ENCODE measurements at regions of chr2 and their contacts with region 1.

Region 1: GRCh38 chr2:226799181-226799975 is at the start of gene IRS1:
- DNase-seq: peak; percentile 46 to 66 (median 50)
- H3K4me3 ChIP-seq: peak within 1 kb of the TSS; percentile 29 to 66
- H3K4me3 Mint-ChIP-seq: peak within 1 kb of the TSS; percentile 84 to 90 (median 88)
- H3K27ac ChIP-seq: peak within 1 kb of the TSS; percentile 1
- H3K27ac Mint-ChIP-seq: peak within 1 kb of the TSS in 4 of 7 donors; percentile 42 to 84 (median 62)
- H3K4me1 ChIP-seq: peaks cover 22% of the 10 kb centered on the region
- H3K4me1 Mint-ChIP-seq: peaks cover 18 to 35% (median 24%) of the 10 kb centered on the region in 4 donors
- H3K27me3 ChIP-seq: no peaks in the 10 kb centered on the region
- H3K27me3 Mint-ChIP-seq: peaks cover 4 to 11% of the 10 kb centered on the region in 2 donors
- total RNA-seq, gene IRS1: 2.2 to 2.4 TPM

Region 2: GRCh38 chr2:225660262-225661131 is 1138.9 kb before region 1 on chr2:
- CTCF ChIA-PET with region 1: interaction called, 18 read pairs
- POLR2A ChIA-PET with region 1: no interaction called
- intact Hi-C with region 1: no loop called
- DNase-seq: peak; percentile 51 to 63 (median 61)
- H3K4me3 ChIP-seq: no peak overlapping the region
- H3K4me3 Mint-ChIP-seq: no peak overlapping the region
- H3K27ac ChIP-seq: no peak overlapping the region
- H3K27ac Mint-ChIP-seq: no peak overlapping the region
- H3K4me1 ChIP-seq: no peaks in the 10 kb centered on the region
- H3K4me1 Mint-ChIP-seq: peaks cover 0 to 2% (median under 1%) of the 10 kb centered on the region in 4 donors
- H3K27me3 ChIP-seq: no peaks in the 10 kb centered on the region
- H3K27me3 Mint-ChIP-seq: peaks cover 10 to 15% of the 10 kb centered on the region in 2 donors

Region 3: GRCh38 chr2:226030788-226031646 is 768.4 kb before region 1 on chr2:
- CTCF ChIA-PET with region 1: no interaction called
- POLR2A ChIA-PET with region 1: no interaction called
- intact Hi-C with region 1: loop called (anchors 5 kb)
- DNase-seq: no peak
- H3K4me3 ChIP-seq: no peak overlapping the region
- H3K4me3 Mint-ChIP-seq: peak overlapping the region in 7 of 8 donors; percentile 30 to 81 (median 59)
- H3K27ac ChIP-seq: no peak overlapping the region
- H3K27ac Mint-ChIP-seq: no peak overlapping the region
- H3K4me1 ChIP-seq: no peaks in the 10 kb centered on the region
- H3K4me1 Mint-ChIP-seq: peaks cover 5 to 17% (median 7%) of the 10 kb centered on the region in 4 donors
- H3K27me3 ChIP-seq: peaks cover 4% of the 10 kb centered on the region
- H3K27me3 Mint-ChIP-seq: peaks cover 26 to 30% of the 10 kb centered on the region in 2 donors

Region 4: GRCh38 chr2:226742347-226742746 is 57.0 kb before region 1 on chr2:
- CTCF ChIA-PET with region 1: no interaction called
- POLR2A ChIA-PET with region 1: no interaction called
- intact Hi-C with region 1: no loop called
- DNase-seq: no peak
- H3K4me3 ChIP-seq: no peak overlapping the region
- H3K4me3 Mint-ChIP-seq: no peak overlapping the region
- H3K27ac ChIP-seq: no peak overlapping the region
- H3K27ac Mint-ChIP-seq: no peak overlapping the region
- H3K4me1 ChIP-seq: no peaks in the 10 kb centered on the region
- H3K4me1 Mint-ChIP-seq: peaks cover 0 to 1% (median 0%) of the 10 kb centered on the region in 4 donors
- H3K27me3 ChIP-seq: no peaks in the 10 kb centered on the region
- H3K27me3 Mint-ChIP-seq: peaks cover 2% of the 10 kb centered on the region in 2 donors

Region 5: DNA sequence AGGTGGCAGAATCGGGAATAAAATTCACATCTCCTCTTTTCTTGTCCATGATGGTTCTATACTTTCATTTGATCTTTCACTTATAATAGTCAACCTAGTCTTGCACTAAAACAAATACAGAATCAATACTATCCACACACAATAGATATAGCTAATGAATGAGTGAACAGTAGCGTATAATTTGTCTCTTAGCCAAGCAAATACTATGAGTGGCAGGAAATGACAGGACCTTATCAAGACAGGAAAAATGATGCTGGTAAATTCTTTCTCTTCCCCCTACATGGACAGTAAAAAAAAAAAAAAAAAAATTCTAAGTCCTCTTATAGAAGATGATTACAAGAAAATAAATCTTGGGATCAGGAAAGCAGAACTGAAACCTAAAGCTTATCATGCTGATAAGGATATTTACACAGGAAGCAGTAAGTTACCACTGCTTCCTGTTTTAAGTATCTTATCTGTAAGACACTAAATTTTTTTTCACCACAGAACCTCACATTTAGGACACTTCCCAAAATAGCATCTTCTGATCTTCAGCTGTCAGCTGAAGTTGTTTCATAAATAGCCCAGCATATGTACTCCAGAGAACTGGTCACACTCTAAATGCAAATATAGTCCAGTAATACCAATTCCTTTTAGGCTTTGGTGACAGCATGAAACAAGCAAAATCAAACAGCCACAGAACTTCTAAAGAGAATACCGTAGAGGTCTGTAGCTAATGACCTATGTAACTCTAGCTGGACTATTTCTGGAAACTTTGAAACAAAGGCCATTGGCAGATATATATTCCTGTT is 26.8 kb before region 1 on chr2:
- CTCF ChIA-PET with region 1: interaction called, 10 read pairs
- POLR2A ChIA-PET with region 1: interaction called, 3 read pairs
- intact Hi-C with region 1: loop called (anchors 2 kb)
- DNase-seq: peak in 4 of 5 donors; percentile 25 to 48 (median 36)
- H3K4me3 ChIP-seq: peak overlapping the region in 1 of 2 donors; percentile 16
- H3K4me3 Mint-ChIP-seq: peak overlapping the region; percentile 61 to 84 (median 73)
- H3K27ac ChIP-seq: no peak overlapping the region
- H3K27ac Mint-ChIP-seq: peak overlapping the region in 3 of 7 donors; percentile 5 to 43 (median 26)
- H3K4me1 ChIP-seq: peaks cover 22% of the 10 kb centered on the region
- H3K4me1 Mint-ChIP-seq: peaks cover 19 to 26% (median 23%) of the 10 kb centered on the region in 4 donors
- H3K27me3 ChIP-seq: no peaks in the 10 kb centered on the region
- H3K27me3 Mint-ChIP-seq: no peaks in the 10 kb centered on the region

Region 6: DNA sequence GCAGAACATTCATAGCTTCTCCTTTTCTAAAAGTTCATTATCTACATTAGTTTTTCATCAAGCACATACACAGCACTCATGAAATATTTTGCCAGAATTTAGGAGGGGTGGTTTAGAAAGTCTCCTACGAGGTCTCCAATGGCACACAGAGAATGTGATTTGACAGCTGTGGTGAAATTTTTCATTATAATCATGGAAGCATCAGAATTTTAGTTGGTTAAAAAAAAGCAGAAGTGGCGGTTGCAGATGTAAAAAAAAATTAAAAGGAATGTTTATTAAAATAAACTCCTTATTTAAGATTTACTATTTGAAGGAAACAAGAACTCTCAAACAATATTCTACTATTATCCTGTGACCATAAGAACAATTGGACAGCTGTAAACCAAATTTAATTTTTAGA is 25.7 kb after region 1 on chr2:
- CTCF ChIA-PET with region 1: interaction called, 12 read pairs
- POLR2A ChIA-PET with region 1: no interaction called
- intact Hi-C with region 1: no loop called
- DNase-seq: no peak
- H3K4me3 ChIP-seq: no peak overlapping the region
- H3K4me3 Mint-ChIP-seq: no peak overlapping the region
- H3K27ac ChIP-seq: no peak overlapping the region
- H3K27ac Mint-ChIP-seq: no peak overlapping the region
- H3K4me1 ChIP-seq: no peaks in the 10 kb centered on the region
- H3K4me1 Mint-ChIP-seq: no peaks in the 10 kb centered on the region
- H3K27me3 ChIP-seq: no peaks in the 10 kb centered on the region
- H3K27me3 Mint-ChIP-seq: no peaks in the 10 kb centered on the region

Region 7: GRCh38 chr2:227238238-227239237 is 439.2 kb after region 1 on chr2:
- CTCF ChIA-PET with region 1: no interaction called
- POLR2A ChIA-PET with region 1: no interaction called
- intact Hi-C with region 1: loop called (anchors 1 kb)
- DNase-seq: peak; percentile 38 to 48 (median 40)
- H3K4me3 ChIP-seq: no peak overlapping the region
- H3K4me3 Mint-ChIP-seq: no peak overlapping the region
- H3K27ac ChIP-seq: no peak overlapping the region
- H3K27ac Mint-ChIP-seq: no peak overlapping the region
- H3K4me1 ChIP-seq: no peaks in the 10 kb centered on the region
- H3K4me1 Mint-ChIP-seq: no peaks in the 10 kb centered on the region
- H3K27me3 ChIP-seq: no peaks in the 10 kb centered on the region
- H3K27me3 Mint-ChIP-seq: peaks cover 9 to 15% of the 10 kb centered on the region in 2 donors

Measured in CD4-positive, alpha-beta memory T cell (primary cell).